Activated T-helper 1 cell treated with anti-CD3 and anti-CD28 coated beads, Interleukin-12 subunit alpha, Interleukin-12 subunit beta, Interleukin-2, Interleukin-4 antibody, amounts not matched to agents 30 ng/mL and 10 ng/mL and 1 ng/mL, durations not matched to agents 14 hours and 24 hours and 36 hours (primary cell): ENCODE measurements at regions of chr15 and their contacts with region 1.

Region 1: DNA sequence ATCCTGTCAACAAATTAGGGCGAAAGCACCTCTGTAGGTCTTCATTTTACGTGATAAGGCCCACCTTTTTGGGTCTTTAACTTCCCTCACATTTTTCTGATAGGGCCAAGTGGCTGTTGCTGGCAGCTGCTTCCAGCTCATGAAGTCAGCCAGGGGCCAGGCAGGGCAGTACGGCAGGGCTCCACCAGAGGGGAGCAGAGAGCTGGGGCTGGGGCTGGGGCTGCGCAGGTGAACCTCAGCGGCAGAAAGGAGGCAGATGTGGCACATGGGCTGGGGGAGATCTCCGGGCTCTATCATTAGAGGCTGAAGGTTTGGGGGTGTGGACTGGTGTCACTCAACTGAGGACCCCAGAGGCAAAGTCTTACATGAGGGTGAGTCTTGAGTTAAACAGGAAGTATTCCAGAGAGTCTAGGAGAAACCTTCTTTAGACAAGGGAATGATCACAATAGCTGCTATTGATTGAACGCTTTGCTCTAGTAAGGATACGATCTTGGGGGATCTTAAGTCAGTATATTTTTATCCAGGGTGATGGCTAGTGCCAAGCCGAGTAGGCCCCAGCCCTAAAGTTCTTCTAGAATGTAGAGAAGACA is 62.8 kb upstream of the MEX3B start:
- DNase-seq: peak; percentile 63
- H3K4me3 Mint-ChIP-seq: no peak overlapping the region
- H3K27ac Mint-ChIP-seq: no peak overlapping the region
- H3K4me1 Mint-ChIP-seq: peaks cover 7% of the 10 kb centered on the region
- H3K27me3 Mint-ChIP-seq: no peaks in the 10 kb centered on the region

Region 2: DNA sequence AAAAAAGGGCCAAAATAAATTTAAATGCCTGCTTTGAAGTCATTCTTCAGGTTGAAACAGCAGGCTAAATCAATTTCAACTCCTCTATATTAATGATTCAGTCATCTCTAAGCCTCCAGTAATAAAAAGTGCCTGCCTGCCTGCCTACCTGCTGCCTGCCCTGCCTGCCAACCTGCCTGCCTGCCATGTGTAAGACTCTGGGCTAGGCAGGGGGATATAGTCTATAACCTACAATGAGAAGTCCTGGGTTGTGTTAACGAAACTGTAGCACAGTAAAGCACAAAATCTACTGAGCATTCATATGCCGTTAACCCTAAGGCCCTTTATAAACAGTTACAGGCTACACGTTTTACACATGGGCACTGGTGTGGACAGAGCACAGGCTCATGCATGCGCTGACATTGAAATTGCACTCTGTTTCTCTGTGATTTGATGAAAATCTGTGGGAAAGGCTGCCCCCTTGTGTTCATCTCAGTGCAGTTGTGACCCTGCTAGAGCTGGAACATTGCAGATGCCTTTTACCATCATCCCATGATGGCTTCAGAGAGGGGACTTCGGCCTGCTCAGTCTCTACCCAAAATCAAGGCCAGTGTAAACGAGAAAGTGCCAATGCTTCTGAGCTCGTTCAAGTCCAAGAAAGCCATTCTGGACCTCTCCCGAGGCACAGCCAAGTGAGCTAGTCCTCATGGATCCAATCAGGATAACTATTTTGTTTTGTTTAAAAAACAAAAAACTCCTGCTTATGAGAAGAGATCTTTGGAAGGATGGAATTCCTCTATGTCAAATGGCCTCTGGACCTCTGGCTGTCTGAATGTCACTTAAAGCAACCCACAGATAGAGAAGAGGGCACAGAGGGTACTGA is 89.4 kb after region 1 on chr15:
- intact Hi-C with region 1: loop called (anchors 1 kb)
- DNase-seq: peak; percentile 50
- H3K4me3 Mint-ChIP-seq: no peak overlapping the region
- H3K27ac Mint-ChIP-seq: no peak overlapping the region
- H3K4me1 Mint-ChIP-seq: no peaks in the 10 kb centered on the region
- H3K27me3 Mint-ChIP-seq: no peaks in the 10 kb centered on the region